Sigmoid colon (tissue), 7 donors: ENCODE measurements at regions of chr9 and their contacts with region 1.

Region 1: GRCh38 chr9:114587385-114588202 is at the start of gene ATP6V1G1:
- DNase-seq: peak; percentile 100
- H3K4me3 ChIP-seq: peak within 1 kb of the TSS; percentile 72 to 88 (median 76)
- H3K27ac ChIP-seq: peak within 1 kb of the TSS; percentile 85 to 92 (median 90)
- H3K4me1 ChIP-seq: peaks cover 0 to 49% (median 46%) of the 10 kb centered on the region in 4 donors
- H3K27me3 ChIP-seq: no peaks in the 10 kb centered on the region
- CTCF ChIP-seq: no peak
- EP300 ChIP-seq: peak in 1 of 4 donors; percentile 64
- POLR2A ChIP-seq: peak; percentile 86 to 93
- total RNA-seq, gene ATP6V1G1: 124 to 185 (median 155) TPM

Region 2: DNA sequence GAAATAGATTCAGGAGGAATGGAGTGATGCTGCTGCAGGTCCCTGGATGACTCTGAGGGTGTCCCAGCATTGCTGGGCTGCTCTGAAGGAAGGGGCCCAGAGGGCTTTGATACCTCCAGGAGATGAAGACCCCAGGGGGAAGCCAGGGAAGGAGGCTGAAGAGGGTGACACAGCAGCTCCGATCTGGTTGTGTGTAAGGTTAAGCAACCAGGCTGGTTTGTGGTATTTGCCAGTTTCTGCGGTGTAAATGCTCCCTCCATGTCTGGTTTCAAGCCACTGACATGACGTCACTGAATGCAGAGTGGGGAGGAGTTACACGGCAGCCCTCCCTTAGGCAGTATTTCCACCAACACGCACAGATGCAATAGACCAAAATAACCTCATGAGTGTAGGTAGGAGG is 304.7 kb before region 1 on chr9:
- intact Hi-C with region 1: no loop called
- DNase-seq: peak; percentile 39
- H3K4me3 ChIP-seq: no peak overlapping the region
- H3K27ac ChIP-seq: no peak overlapping the region
- H3K4me1 ChIP-seq: peaks cover 0 to 4% (median 0%) of the 10 kb centered on the region in 4 donors
- H3K27me3 ChIP-seq: no peaks in the 10 kb centered on the region
- CTCF ChIP-seq: no peak
- EP300 ChIP-seq: no peak
- POLR2A ChIP-seq: no peak

Region 3: DNA sequence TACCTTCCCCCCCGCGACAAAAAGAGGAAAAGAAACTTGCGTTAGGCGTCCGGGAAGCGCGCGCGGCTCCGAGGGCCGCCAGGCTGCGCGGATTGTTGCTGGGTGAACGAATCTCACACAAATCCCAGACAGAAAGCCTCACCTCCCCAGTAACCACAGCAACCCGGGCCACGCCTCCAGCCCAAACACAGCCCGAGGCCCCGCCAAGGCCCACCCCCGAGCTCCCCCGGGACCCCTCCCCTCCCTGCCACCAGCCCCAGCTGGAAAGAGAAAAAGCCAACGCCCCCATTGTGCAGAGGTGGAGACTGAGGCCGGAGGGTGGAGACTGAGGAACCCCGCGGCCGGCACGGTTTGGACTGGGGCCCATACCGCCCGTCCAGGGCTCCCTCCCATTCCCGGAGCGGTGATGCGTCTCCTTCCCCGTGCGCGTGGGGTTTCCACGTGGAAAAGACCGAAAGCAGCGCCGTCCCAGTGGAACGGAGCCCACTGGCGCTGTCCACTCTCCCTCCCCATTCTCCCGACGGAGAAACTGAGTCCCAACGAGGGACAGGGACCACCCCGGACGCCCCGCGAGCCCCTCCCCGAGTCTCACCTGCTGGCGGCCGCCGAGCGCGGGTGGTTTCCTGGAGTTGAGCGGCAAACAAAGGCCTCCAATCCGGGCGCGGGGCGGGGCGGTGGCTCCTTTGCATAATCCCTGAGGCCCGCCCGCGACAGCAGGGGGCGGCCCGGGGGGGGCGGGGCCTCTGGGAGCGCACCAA is 189.6 kb before region 1 on chr9:
- intact Hi-C with region 1: loop called (anchors 5 kb)
- DNase-seq: peak; percentile 99
- H3K4me3 ChIP-seq: peak overlapping the region; percentile 65 to 81 (median 78)
- H3K27ac ChIP-seq: peak overlapping the region; percentile 81 to 86 (median 84)
- H3K4me1 ChIP-seq: peaks cover 0 to 34% (median 26%) of the 10 kb centered on the region in 4 donors
- H3K27me3 ChIP-seq: no peaks in the 10 kb centered on the region
- CTCF ChIP-seq: no peak
- EP300 ChIP-seq: peak in 1 of 4 donors; percentile 53
- POLR2A ChIP-seq: peak; percentile 36 to 49

Region 4: DNA sequence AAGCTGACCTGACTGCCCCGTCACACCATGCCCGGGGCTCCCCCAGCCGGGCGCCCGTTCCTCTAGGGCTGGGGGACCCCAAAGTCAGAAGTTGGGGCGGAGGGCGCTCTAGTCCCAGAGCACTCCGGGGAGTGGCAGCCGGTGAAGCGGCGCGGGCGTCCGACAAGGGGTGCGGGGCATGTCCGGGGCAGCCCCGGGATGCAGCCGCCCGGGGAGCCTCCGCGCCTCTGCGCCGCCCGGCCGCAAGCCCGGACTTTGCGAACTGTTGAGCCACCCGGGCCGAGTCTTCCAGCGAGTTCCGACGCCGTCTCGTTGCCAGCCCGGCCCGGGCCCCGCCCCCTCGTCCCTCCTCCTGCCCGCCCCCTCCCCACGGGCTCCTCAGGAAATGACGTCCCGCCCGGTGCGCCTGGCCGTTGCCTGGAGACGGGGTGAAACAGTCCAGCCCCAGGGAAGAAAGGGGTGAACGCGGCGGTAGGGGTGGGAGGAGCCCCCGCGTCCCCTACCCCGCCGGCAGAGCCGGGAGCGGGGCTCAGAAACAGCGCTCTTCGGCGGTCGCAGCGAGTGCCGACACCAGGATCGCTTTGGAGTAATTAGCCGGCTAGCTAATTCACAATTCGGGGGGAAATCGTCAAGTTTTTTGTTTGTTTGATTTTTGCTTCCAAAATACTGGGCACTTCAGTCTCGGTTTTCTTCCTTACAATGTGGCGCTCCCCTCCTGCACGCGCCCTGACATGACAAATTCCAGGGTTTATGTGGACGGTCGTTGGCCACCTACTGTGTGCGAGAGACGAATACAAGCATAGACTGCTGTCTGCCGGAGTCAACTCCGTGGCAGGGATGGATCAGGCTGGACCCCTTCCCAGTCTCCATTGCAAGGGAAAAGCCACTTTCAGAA is 82.2 kb before region 1 on chr9 and contains the start of gene WHRN:
- intact Hi-C with region 1: loop called (anchors 2 kb)
- DNase-seq: peak; percentile 98
- H3K4me3 ChIP-seq: peak within 1 kb of the TSS; percentile 57 to 86 (median 70)
- H3K27ac ChIP-seq: peak within 1 kb of the TSS; percentile 80 to 93 (median 88)
- H3K4me1 ChIP-seq: peaks cover 0 to 54% (median 32%) of the 10 kb centered on the region in 4 donors
- H3K27me3 ChIP-seq: no peaks in the 10 kb centered on the region
- CTCF ChIP-seq: no peak
- EP300 ChIP-seq: peak in 2 of 4 donors; percentile 49 to 65
- POLR2A ChIP-seq: peak; percentile 38 to 61
- total RNA-seq, gene WHRN: 4.6 to 7.8 (median 6.3) TPM

Region 5: DNA sequence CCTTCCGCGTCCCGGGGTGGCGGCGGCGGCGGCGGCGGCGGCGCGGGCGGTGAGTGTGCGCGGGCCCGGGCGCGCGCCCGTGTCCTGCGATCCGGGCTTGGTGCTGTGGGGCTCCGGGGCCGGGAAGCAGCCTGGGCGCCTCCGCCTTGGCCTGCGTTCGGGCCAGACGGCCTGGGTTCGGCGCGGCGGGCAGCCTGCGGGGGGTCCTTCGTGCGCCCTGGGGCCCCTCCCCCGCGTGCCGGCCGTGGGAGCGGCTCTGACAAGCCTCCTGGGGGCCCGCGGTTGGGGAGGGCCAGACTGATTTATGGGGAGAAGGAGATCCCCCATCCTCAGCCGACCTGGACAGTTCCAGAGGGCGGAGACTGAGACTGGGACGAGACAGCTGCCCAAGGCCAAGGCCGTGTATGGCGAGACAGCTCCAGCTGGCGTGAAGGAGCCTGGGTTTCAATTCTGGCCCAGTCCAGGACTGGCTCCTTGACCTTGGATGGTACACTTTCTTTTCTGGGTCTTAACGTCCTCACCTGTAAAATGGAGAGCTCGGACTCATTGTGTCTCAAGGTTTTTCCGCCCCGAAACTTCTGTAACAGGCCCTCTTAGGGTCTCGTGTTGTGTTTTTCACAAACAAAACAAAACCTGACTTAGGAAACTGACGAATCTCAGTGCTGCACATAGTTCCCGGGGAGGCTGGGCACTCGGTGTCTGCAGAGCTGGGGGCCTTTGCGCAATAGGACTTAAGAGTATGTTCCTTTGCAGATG is 24.1 kb after region 1 on chr9:
- intact Hi-C with region 1: loop called (anchors 1 kb)
- DNase-seq: peak; percentile 87
- H3K4me3 ChIP-seq: peak overlapping the region; percentile 60 to 71 (median 65)
- H3K27ac ChIP-seq: peak overlapping the region; percentile 92 to 97 (median 94)
- H3K4me1 ChIP-seq: peaks cover 0 to 33% (median 28%) of the 10 kb centered on the region in 4 donors
- H3K27me3 ChIP-seq: no peaks in the 10 kb centered on the region
- CTCF ChIP-seq: no peak
- EP300 ChIP-seq: peak in 1 of 4 donors; percentile 12
- POLR2A ChIP-seq: no peak

Region 6: GRCh38 chr9:116566677-116567488 is 1979.3 kb after region 1 on chr9:
- intact Hi-C with region 1: loop called (anchors 10 kb)
- DNase-seq: no peak
- H3K4me3 ChIP-seq: no peak overlapping the region
- H3K27ac ChIP-seq: no peak overlapping the region
- H3K4me1 ChIP-seq: peaks cover 0 to 18% (median 3%) of the 10 kb centered on the region in 4 donors
- H3K27me3 ChIP-seq: no peaks in the 10 kb centered on the region
- CTCF ChIP-seq: no peak
- EP300 ChIP-seq: no peak
- POLR2A ChIP-seq: no peak